ENCODE measurements at regions of chr2 and their contacts with region 1.

Region 1: DNA sequence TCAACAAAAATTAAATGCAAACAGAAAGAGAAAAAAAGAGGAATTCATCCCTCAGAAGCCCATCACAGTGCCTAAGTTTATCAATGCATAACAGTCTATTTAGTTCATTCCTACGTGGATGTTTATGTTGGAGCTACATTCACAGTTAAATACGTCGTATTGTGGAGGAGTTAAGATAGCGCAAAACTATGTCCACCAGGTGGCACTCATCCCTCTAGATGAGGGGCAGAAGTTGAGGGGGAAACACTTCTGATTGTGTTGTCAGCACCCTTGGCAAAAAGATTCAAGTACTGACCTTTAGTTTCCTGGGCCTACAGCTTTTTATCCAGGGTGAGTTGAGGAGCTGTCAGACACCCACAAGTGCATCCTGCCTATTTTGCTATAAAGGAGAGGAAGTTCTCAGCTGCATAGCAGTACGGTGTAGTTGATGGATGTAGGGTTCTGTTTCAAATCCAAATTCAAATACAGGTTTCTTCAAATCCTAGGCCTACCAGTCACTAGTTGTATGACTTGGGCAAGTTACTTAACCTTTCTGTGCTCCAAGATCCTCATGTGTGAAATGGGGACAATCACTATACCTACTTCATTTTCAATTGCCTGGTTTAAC is 26.8 kb upstream of the MYO1B start:
- DNase-seq: peak; percentile 85
- ATAC-seq: peak; percentile 90
- H3K4me3 Mint-ChIP-seq: no peak overlapping the region
- H3K27ac Mint-ChIP-seq: no peak overlapping the region
- H3K4me1 Mint-ChIP-seq: peaks cover 29% of the 10 kb centered on the region
- H3K27me3 Mint-ChIP-seq: no peaks in the 10 kb centered on the region
- CTCF ChIP-seq: peak; percentile 74

Region 2: DNA sequence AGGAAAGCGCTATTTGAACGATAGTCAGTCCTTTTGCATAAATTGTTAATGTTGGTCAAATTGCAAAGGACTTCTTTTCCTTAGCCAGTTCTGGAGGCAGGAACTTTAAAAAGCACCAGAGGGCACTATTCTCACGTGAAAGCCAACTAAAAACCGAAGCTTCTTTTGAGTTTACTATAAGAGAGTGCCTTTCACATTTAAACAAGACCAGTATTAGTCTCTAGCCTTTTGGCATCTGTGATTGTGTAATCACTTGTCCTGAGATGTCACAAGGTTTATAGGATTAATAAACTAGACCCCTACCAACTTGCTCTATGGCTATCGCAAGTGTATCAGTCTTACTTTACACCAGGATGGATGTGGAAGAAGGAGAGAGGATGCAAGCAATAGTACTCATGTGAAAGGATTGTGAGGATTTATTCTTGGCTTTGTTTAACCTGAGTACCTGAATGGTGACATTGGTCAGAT is 53.2 kb before region 1 on chr2:
- CTCF ChIA-PET with region 1: interaction called, 58 read pairs
- POLR2A ChIA-PET with region 1: no interaction called
- intact Hi-C with region 1: no loop called
- DNase-seq: no peak
- ATAC-seq: peak; percentile 84
- H3K4me3 Mint-ChIP-seq: no peak overlapping the region
- H3K27ac Mint-ChIP-seq: no peak overlapping the region
- H3K4me1 Mint-ChIP-seq: peaks cover 25% of the 10 kb centered on the region
- H3K27me3 Mint-ChIP-seq: no peaks in the 10 kb centered on the region
- CTCF ChIP-seq: peak; percentile 84

Region 3: DNA sequence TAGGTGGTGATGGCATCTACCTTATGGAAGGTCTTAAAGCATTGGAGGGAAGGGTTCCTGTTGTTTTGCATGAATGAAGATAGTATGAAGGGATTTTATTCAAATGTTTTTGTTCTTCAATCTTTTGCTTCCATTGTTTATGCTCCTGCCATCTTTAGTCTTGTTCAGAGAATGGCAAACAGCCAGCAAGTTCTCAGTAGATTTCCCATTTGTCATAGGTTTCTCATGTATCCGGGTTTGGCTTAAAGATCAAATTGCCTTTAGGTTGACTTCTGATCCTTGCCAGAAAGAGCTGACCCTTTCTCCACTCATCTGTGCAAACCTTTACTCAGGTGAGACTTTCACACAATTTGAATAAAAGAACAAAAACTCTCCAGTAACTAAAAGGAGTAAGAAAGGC is 23.4 kb before region 1 on chr2:
- CTCF ChIA-PET with region 1: interaction called, 33 read pairs
- POLR2A ChIA-PET with region 1: interaction called, 6 read pairs
- intact Hi-C with region 1: no loop called
- DNase-seq: no peak
- ATAC-seq: no peak
- H3K4me3 Mint-ChIP-seq: peak overlapping the region; percentile 19
- H3K27ac Mint-ChIP-seq: peak overlapping the region; percentile 100
- H3K4me1 Mint-ChIP-seq: peaks cover 68% of the 10 kb centered on the region
- H3K27me3 Mint-ChIP-seq: no peaks in the 10 kb centered on the region
- CTCF ChIP-seq: no peak

Region 4: DNA sequence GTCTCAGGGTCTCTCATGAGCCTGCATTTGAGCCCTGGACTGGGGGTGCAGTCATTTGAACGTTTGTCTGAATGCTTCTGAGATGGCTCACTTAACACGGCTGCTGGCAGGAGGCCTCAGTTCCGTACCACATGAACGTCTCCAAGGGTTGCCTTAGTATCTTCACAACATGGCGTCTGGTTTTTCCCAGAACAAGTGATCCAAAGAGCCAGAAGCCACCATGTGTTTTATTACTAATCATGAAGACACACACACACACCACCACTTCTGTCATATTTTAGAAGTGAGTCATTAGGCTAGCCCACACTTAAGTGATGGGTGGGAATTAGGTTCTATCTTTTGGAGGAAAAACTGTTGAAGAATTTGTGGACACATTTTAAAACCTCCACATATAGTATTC is 11.8 kb after region 1 on chr2:
- CTCF ChIA-PET with region 1: interaction called, 19 read pairs
- POLR2A ChIA-PET with region 1: no interaction called
- intact Hi-C with region 1: no loop called
- DNase-seq: no peak
- ATAC-seq: no peak
- H3K4me3 Mint-ChIP-seq: no peak overlapping the region
- H3K27ac Mint-ChIP-seq: no peak overlapping the region
- H3K4me1 Mint-ChIP-seq: peaks cover 2% of the 10 kb centered on the region
- H3K27me3 Mint-ChIP-seq: no peaks in the 10 kb centered on the region
- CTCF ChIP-seq: no peak

Region 5: GRCh38 chr2:191515551-191515950 is 297.2 kb after region 1 on chr2:
- CTCF ChIA-PET with region 1: interaction called, 8 read pairs
- POLR2A ChIA-PET with region 1: no interaction called
- intact Hi-C with region 1: loop called (anchors 5 kb)
- DNase-seq: no peak
- ATAC-seq: no peak
- H3K4me3 Mint-ChIP-seq: no peak overlapping the region
- H3K27ac Mint-ChIP-seq: no peak overlapping the region
- H3K4me1 Mint-ChIP-seq: no peaks in the 10 kb centered on the region
- H3K27me3 Mint-ChIP-seq: no peaks in the 10 kb centered on the region
- CTCF ChIP-seq: no peak

Measured in activated CD8-positive, alpha-beta T cell treated with anti-CD3 and anti-CD28 coated beads for 36 hours (primary cell).